CD4-positive, alpha-beta memory T cell (primary cell): ENCODE measurements at regions of chr12 and their contacts with region 1.

Region 1: GRCh38 chr12:7933255-7933729 is 2.7 kb downstream of the SLC2A3 start:
- DNase-seq: peak; percentile 82 to 87 (median 86)
- H3K4me3 ChIP-seq: peak overlapping the region; percentile 84 to 87
- H3K4me3 Mint-ChIP-seq: no peak overlapping the region
- H3K27ac ChIP-seq: peak overlapping the region; percentile 90
- H3K27ac Mint-ChIP-seq: no peak overlapping the region
- H3K4me1 ChIP-seq: peaks cover 68% of the 10 kb centered on the region
- H3K4me1 Mint-ChIP-seq: peaks cover 22 to 39% (median 30%) of the 10 kb centered on the region in 4 donors
- H3K27me3 ChIP-seq: no peaks in the 10 kb centered on the region
- H3K27me3 Mint-ChIP-seq: no peaks in the 10 kb centered on the region

Region 2: DNA sequence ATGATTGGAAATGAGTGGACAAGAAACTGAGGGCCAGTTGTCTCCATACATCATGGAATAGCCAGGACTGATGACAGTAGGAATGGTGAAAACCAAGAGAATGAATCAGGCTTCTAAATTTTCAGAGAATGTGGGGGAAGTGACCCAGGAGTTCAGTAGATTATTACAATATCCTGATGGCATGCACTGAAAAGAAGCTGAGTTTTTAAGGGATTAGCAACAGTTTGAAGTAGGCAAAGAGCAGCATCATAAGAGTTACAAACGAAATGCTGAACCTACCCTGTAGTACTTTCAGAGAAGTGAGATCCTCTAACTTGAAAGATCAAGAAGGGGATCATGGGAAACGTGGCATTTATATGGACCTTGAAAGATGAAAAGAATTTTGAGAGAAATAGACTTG is 73.7 kb before region 1 on chr12:
- CTCF ChIA-PET with region 1: interaction called, 31 read pairs
- POLR2A ChIA-PET with region 1: interaction called, 7 read pairs
- intact Hi-C with region 1: loop called (anchors 1 kb)
- DNase-seq: no peak
- H3K4me3 ChIP-seq: no peak overlapping the region
- H3K4me3 Mint-ChIP-seq: no peak overlapping the region
- H3K27ac ChIP-seq: no peak overlapping the region
- H3K27ac Mint-ChIP-seq: peak overlapping the region in 4 of 7 donors; percentile 5 to 47 (median 30)
- H3K4me1 ChIP-seq: no peaks in the 10 kb centered on the region
- H3K4me1 Mint-ChIP-seq: peaks cover 6 to 13% (median 9%) of the 10 kb centered on the region in 4 donors
- H3K27me3 ChIP-seq: no peaks in the 10 kb centered on the region
- H3K27me3 Mint-ChIP-seq: peaks cover 1 to 4% of the 10 kb centered on the region in 2 donors

Region 3: GRCh38 chr12:7872566-7873319 is 60.5 kb before region 1 on chr12 and contains the start of gene SLC2A14:
- CTCF ChIA-PET with region 1: no interaction called
- POLR2A ChIA-PET with region 1: no interaction called
- intact Hi-C with region 1: no loop called
- DNase-seq: no peak
- H3K4me3 ChIP-seq: no peak within 1 kb of the TSS
- H3K4me3 Mint-ChIP-seq: peak within 1 kb of the TSS in 2 of 8 donors; percentile 36 to 65
- H3K27ac ChIP-seq: no peak within 1 kb of the TSS
- H3K27ac Mint-ChIP-seq: peak within 1 kb of the TSS in 1 of 7 donors; percentile 9
- H3K4me1 ChIP-seq: no peaks in the 10 kb centered on the region
- H3K4me1 Mint-ChIP-seq: peaks cover 0 to 3% (median 0%) of the 10 kb centered on the region in 4 donors
- H3K27me3 ChIP-seq: no peaks in the 10 kb centered on the region
- H3K27me3 Mint-ChIP-seq: peaks cover 21 to 22% of the 10 kb centered on the region in 2 donors
- total RNA-seq, gene SLC2A14: 3.5 TPM

Region 4: DNA sequence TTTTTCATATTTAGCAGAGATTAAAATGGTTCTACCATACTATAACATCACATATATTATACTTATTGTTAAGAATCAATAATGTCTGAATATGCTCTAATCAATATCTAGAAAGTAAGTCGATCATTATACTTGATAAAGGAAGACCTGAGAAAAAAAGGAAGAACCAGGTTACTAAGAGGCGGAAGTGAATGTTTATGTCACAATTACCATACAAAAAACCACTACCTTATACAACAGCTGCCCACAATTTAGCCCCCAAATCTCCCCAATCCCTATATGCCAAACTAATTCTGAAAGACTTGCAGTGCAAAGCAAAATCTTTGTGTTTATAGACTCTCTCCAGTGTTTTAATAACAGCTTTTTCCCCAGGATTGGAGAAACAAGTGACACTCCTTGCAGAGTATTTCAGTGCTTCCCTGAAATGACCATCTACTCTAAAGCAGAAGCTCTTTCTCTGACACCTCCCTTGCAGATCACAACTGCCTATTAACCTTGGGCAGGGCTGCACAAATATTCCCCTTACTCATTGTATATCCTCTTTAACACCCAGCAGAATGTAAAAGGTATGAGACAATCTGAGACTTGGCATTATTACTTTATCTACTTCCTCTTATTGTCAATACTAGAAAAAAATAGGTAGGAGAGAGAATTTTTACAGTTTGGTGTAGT is 15.4 kb after region 1 on chr12:
- CTCF ChIA-PET with region 1: interaction called, 20 read pairs
- POLR2A ChIA-PET with region 1: interaction called, 3 read pairs
- intact Hi-C with region 1: no loop called
- DNase-seq: no peak
- H3K4me3 ChIP-seq: no peak overlapping the region
- H3K4me3 Mint-ChIP-seq: no peak overlapping the region
- H3K27ac ChIP-seq: no peak overlapping the region
- H3K27ac Mint-ChIP-seq: no peak overlapping the region
- H3K4me1 ChIP-seq: no peaks in the 10 kb centered on the region
- H3K4me1 Mint-ChIP-seq: peaks cover 0 to 4% (median under 1%) of the 10 kb centered on the region in 4 donors
- H3K27me3 ChIP-seq: no peaks in the 10 kb centered on the region
- H3K27me3 Mint-ChIP-seq: no peaks in the 10 kb centered on the region

Region 5: GRCh38 chr12:7970475-7971252 is 37.4 kb after region 1 on chr12:
- CTCF ChIA-PET with region 1: interaction called, 396 read pairs
- POLR2A ChIA-PET with region 1: interaction called, 158 read pairs
- intact Hi-C with region 1: loop called (anchors 1 kb)
- DNase-seq: peak; percentile 83 to 90 (median 86)
- H3K4me3 ChIP-seq: peak overlapping the region; percentile 70 to 83
- H3K4me3 Mint-ChIP-seq: peak overlapping the region; percentile 82 to 95 (median 90)
- H3K27ac ChIP-seq: peak overlapping the region; percentile 93
- H3K27ac Mint-ChIP-seq: peak overlapping the region; percentile 92 to 100 (median 98)
- H3K4me1 ChIP-seq: peaks cover 34% of the 10 kb centered on the region
- H3K4me1 Mint-ChIP-seq: peaks cover 15 to 29% (median 24%) of the 10 kb centered on the region in 4 donors
- H3K27me3 ChIP-seq: no peaks in the 10 kb centered on the region
- H3K27me3 Mint-ChIP-seq: peaks cover 0 to 3% of the 10 kb centered on the region in 2 donors

Region 6: GRCh38 chr12:7995266-7995963 is 62.1 kb after region 1 on chr12:
- CTCF ChIA-PET with region 1: interaction called, 136 read pairs
- POLR2A ChIA-PET with region 1: interaction called, 92 read pairs
- intact Hi-C with region 1: loop called (anchors 1 kb)
- DNase-seq: peak; percentile 81 to 90 (median 86)
- H3K4me3 ChIP-seq: no peak overlapping the region
- H3K4me3 Mint-ChIP-seq: no peak overlapping the region
- H3K27ac ChIP-seq: peak overlapping the region; percentile 1
- H3K27ac Mint-ChIP-seq: no peak overlapping the region
- H3K4me1 ChIP-seq: peaks cover 27% of the 10 kb centered on the region
- H3K4me1 Mint-ChIP-seq: peaks cover 9 to 14% (median 12%) of the 10 kb centered on the region in 4 donors
- H3K27me3 ChIP-seq: no peaks in the 10 kb centered on the region
- H3K27me3 Mint-ChIP-seq: no peaks in the 10 kb centered on the region

Region 7: GRCh38 chr12:8032242-8033152 is 99.2 kb after region 1 on chr12 and contains the start of gene FOXJ2:
- CTCF ChIA-PET with region 1: interaction called, 6 read pairs
- POLR2A ChIA-PET with region 1: interaction called, 59 read pairs
- intact Hi-C with region 1: no loop called
- DNase-seq: peak; percentile 75 to 84 (median 82)
- H3K4me3 ChIP-seq: peak within 1 kb of the TSS; percentile 87 to 95
- H3K4me3 Mint-ChIP-seq: peak within 1 kb of the TSS; percentile 88 to 94 (median 90)
- H3K27ac ChIP-seq: peak within 1 kb of the TSS; percentile 97
- H3K27ac Mint-ChIP-seq: peak within 1 kb of the TSS; percentile 93 to 97 (median 96)
- H3K4me1 ChIP-seq: peaks cover 57% of the 10 kb centered on the region
- H3K4me1 Mint-ChIP-seq: peaks cover 41 to 56% (median 52%) of the 10 kb centered on the region in 4 donors
- H3K27me3 ChIP-seq: no peaks in the 10 kb centered on the region
- H3K27me3 Mint-ChIP-seq: no peaks in the 10 kb centered on the region
- total RNA-seq, gene FOXJ2: 32.4 to 33.4 TPM

Region 8: GRCh38 chr12:8709124-8709830 is 776.0 kb after region 1 on chr12:
- CTCF ChIA-PET with region 1: no interaction called
- POLR2A ChIA-PET with region 1: no interaction called
- intact Hi-C with region 1: no loop called
- DNase-seq: no peak
- H3K4me3 ChIP-seq: no peak overlapping the region
- H3K4me3 Mint-ChIP-seq: peak overlapping the region in 2 of 8 donors; percentile 8 to 25
- H3K27ac ChIP-seq: no peak overlapping the region
- H3K27ac Mint-ChIP-seq: peak overlapping the region in 1 of 7 donors; percentile 37
- H3K4me1 ChIP-seq: no peaks in the 10 kb centered on the region
- H3K4me1 Mint-ChIP-seq: peaks cover 3 to 6% (median 4%) of the 10 kb centered on the region in 4 donors
- H3K27me3 ChIP-seq: no peaks in the 10 kb centered on the region
- H3K27me3 Mint-ChIP-seq: no peaks in the 10 kb centered on the region